ENCODE measurements at regions of chr16 and their contacts with region 1.

Region 1: GRCh38 chr16:58661199-58661830 is 23.3 kb downstream of the SLC38A7 start:
- DNase-seq: peak; percentile 77 to 79
- H3K4me3 ChIP-seq: no peak overlapping the region
- H3K4me3 Mint-ChIP-seq: no peak overlapping the region
- H3K27ac Mint-ChIP-seq: no peak overlapping the region
- H3K4me1 ChIP-seq: peaks cover 24% of the 10 kb centered on the region
- H3K4me1 Mint-ChIP-seq: peaks cover 11% of the 10 kb centered on the region
- H3K27me3 ChIP-seq: no peaks in the 10 kb centered on the region
- H3K27me3 Mint-ChIP-seq: no peaks in the 10 kb centered on the region
- CTCF ChIP-seq: peak; percentile 63 to 79

Region 2: GRCh38 chr16:58336332-58337089 is 324.8 kb before region 1 on chr16:
- CTCF ChIA-PET with region 1: interaction called, 5 read pairs
- POLR2A ChIA-PET with region 1: no interaction called
- intact Hi-C with region 1: loop called (anchors 2 kb)
- DNase-seq: peak; percentile 89 to 92
- H3K4me3 ChIP-seq: no peak overlapping the region
- H3K4me3 Mint-ChIP-seq: peak overlapping the region; percentile 48
- H3K27ac Mint-ChIP-seq: no peak overlapping the region
- H3K4me1 ChIP-seq: no peaks in the 10 kb centered on the region
- H3K4me1 Mint-ChIP-seq: no peaks in the 10 kb centered on the region
- H3K27me3 ChIP-seq: no peaks in the 10 kb centered on the region
- H3K27me3 Mint-ChIP-seq: no peaks in the 10 kb centered on the region
- CTCF ChIP-seq: peak; percentile 93 to 95

Region 3: DNA sequence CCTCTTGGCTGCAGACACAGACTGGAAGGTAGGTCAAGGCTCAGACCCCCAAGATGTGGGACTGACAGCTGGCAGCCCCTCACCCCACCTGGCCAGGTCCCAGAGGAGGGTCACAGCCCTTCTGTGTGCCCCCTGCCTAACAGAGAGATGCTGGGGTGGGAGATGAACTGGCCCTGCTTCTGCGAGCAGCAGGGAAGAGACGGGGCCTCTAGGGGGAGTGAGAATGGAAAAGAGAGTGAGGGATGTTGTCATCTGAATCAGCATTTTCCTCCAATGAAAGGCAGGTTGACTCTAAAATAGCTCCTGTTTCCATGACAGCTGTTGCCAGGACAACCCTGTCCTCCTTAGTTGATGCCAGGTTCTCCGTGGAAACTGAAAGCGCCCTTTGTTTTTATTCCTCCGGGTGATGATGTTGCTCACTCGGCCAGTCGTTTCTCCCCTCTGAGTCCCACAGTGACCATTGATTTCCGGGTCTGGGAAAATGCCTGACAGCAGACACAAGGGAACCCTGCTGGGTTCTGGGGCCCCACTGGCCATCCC is 166.3 kb before region 1 on chr16:
- CTCF ChIA-PET with region 1: interaction called, 10 read pairs
- POLR2A ChIA-PET with region 1: no interaction called
- intact Hi-C with region 1: no loop called
- DNase-seq: peak; percentile 87 to 90
- H3K4me3 ChIP-seq: no peak overlapping the region
- H3K4me3 Mint-ChIP-seq: no peak overlapping the region
- H3K27ac Mint-ChIP-seq: peak overlapping the region; percentile 80
- H3K4me1 ChIP-seq: peaks cover under 1% of the 10 kb centered on the region
- H3K4me1 Mint-ChIP-seq: no peaks in the 10 kb centered on the region
- H3K27me3 ChIP-seq: no peaks in the 10 kb centered on the region
- H3K27me3 Mint-ChIP-seq: peaks cover 4% of the 10 kb centered on the region
- CTCF ChIP-seq: peak; percentile 40 to 67

Region 4: GRCh38 chr16:58515125-58515870 is 146.0 kb before region 1 on chr16 and contains the start of gene SETD6:
- CTCF ChIA-PET with region 1: interaction called, 14 read pairs
- POLR2A ChIA-PET with region 1: interaction called, 3 read pairs
- intact Hi-C with region 1: loop called (anchors 1 kb)
- DNase-seq: peak; percentile 91 to 95
- H3K4me3 ChIP-seq: peak within 1 kb of the TSS; percentile 88
- H3K4me3 Mint-ChIP-seq: peak within 1 kb of the TSS; percentile 93
- H3K27ac Mint-ChIP-seq: peak within 1 kb of the TSS; percentile 97
- H3K4me1 ChIP-seq: peaks cover 18% of the 10 kb centered on the region
- H3K4me1 Mint-ChIP-seq: peaks cover 43% of the 10 kb centered on the region
- H3K27me3 ChIP-seq: no peaks in the 10 kb centered on the region
- H3K27me3 Mint-ChIP-seq: no peaks in the 10 kb centered on the region
- CTCF ChIP-seq: peak; percentile 16 to 36
- total RNA-seq, gene SETD6: 34.9 and 41.7 TPM in 2 replicates

Region 5: GRCh38 chr16:58629572-58630104 is 31.7 kb before region 1 on chr16 and contains the start of gene CNOT1:
- CTCF ChIA-PET with region 1: interaction called, 6 read pairs
- POLR2A ChIA-PET with region 1: interaction called, 11 read pairs
- intact Hi-C with region 1: loop called (anchors 1 kb)
- DNase-seq: peak; percentile 100
- H3K4me3 ChIP-seq: peak within 1 kb of the TSS; percentile 87
- H3K4me3 Mint-ChIP-seq: peak within 1 kb of the TSS; percentile 92
- H3K27ac Mint-ChIP-seq: peak within 1 kb of the TSS; percentile 99
- H3K4me1 ChIP-seq: peaks cover 6% of the 10 kb centered on the region
- H3K4me1 Mint-ChIP-seq: peaks cover 13% of the 10 kb centered on the region
- H3K27me3 ChIP-seq: no peaks in the 10 kb centered on the region
- H3K27me3 Mint-ChIP-seq: no peaks in the 10 kb centered on the region
- CTCF ChIP-seq: no peak
- total RNA-seq, gene CNOT1: 413 and 417 TPM in 2 replicates

Region 6: GRCh38 chr16:58684354-58685083 is 23.2 kb after region 1 on chr16 and contains the start of gene SLC38A7:
- CTCF ChIA-PET with region 1: interaction called, 10 read pairs
- POLR2A ChIA-PET with region 1: no interaction called
- intact Hi-C with region 1: loop called (anchors 2 kb)
- DNase-seq: peak; percentile 89
- H3K4me3 ChIP-seq: peak within 1 kb of the TSS; percentile 89
- H3K4me3 Mint-ChIP-seq: peak within 1 kb of the TSS; percentile 81
- H3K27ac Mint-ChIP-seq: peak within 1 kb of the TSS; percentile 84
- H3K4me1 ChIP-seq: peaks cover 9% of the 10 kb centered on the region
- H3K4me1 Mint-ChIP-seq: peaks cover 7% of the 10 kb centered on the region
- H3K27me3 ChIP-seq: no peaks in the 10 kb centered on the region
- H3K27me3 Mint-ChIP-seq: peaks cover 1% of the 10 kb centered on the region
- CTCF ChIP-seq: no peak
- total RNA-seq, gene SLC38A7: 24.1 and 27.6 TPM in 2 replicates